ENCODE measurements at regions of chr12 and their contacts with region 1.

Region 1: DNA sequence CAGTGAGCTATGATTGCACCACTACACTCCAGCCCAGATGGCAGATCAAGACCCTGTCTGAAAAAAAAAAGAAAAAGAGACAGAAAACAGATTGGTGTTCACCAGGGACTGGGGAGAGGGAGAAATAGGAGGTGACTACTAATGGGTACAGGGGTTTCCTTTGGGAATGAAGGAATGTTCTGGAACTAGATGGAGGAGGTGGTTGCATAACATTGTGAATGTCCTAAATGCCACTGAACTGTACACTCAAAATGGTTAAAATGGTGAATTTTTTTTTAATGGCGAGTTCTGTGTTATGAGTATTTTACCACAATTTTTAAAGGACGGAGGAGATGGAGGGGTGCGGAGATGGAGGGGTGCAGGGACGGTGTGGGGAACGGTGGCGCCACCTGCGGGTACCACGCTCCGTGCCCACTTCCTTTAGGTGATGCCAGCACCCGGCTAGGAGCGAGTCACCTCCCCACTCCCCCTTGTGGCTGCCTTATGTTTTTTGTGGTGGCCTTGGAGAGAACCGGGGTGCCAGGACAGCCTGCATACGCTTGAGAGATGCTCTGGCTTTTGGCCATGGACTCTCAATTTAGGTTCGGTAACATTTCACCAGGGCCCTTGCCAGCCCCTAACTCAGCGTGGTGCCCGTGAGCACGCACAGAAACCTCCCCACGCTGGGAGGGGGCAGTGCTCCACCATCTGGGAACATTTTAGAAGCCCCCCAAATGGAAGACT is 16.1 kb downstream of the UBC start:
- DNase-seq: peak; percentile 79
- H3K4me3 Mint-ChIP-seq: no peak overlapping the region
- H3K27ac Mint-ChIP-seq: no peak overlapping the region
- H3K4me1 Mint-ChIP-seq: peaks cover 6% of the 10 kb centered on the region
- H3K27me3 Mint-ChIP-seq: no peaks in the 10 kb centered on the region
- CTCF ChIP-seq: peak; percentile 54

Region 2: GRCh38 chr12:124837958-124838803 is 60.2 kb before region 1 on chr12:
- CTCF ChIA-PET with region 1: no interaction called
- POLR2A ChIA-PET with region 1: no interaction called
- intact Hi-C with region 1: loop called (anchors 2 kb)
- DNase-seq: peak; percentile 99
- H3K4me3 Mint-ChIP-seq: no peak overlapping the region
- H3K27ac Mint-ChIP-seq: peak overlapping the region; percentile 35
- H3K4me1 Mint-ChIP-seq: peaks cover 21% of the 10 kb centered on the region
- H3K27me3 Mint-ChIP-seq: no peaks in the 10 kb centered on the region
- CTCF ChIP-seq: no peak

Region 3: GRCh38 chr12:125402874-125403789 is 504.8 kb after region 1 on chr12:
- CTCF ChIA-PET with region 1: no interaction called
- POLR2A ChIA-PET with region 1: no interaction called
- intact Hi-C with region 1: no loop called
- DNase-seq: peak; percentile 45
- H3K4me3 Mint-ChIP-seq: no peak overlapping the region
- H3K27ac Mint-ChIP-seq: no peak overlapping the region
- H3K4me1 Mint-ChIP-seq: no peaks in the 10 kb centered on the region
- H3K27me3 Mint-ChIP-seq: peaks cover 56% of the 10 kb centered on the region
- CTCF ChIP-seq: peak; percentile 47